Psoas muscle (tissue), 8 donors: ENCODE measurements at regions of chr1 and their contacts with region 1.

Region 1: DNA sequence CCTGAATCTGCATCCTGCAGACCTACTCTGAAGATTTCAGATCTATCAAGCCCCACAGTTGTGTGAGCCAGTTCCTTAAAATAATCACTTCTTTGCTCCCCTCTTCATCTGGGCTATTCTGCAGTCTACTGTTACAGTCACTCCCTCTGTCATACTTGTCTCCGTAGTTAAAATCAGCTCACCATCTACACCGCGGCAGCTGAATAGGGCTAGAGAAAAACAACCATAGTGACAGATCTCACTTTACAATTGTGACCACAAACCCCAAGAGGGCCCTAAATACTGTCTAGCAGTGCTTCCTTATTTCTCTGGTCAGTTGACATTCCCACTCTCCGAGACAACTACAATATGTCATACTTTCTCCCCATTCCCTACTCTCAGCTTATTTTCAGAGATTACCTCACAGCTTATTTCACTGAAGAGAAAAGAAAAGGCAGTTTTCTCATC is 12.9 kb downstream of the DESI2 start:
- DNase-seq: no peak
- ATAC-seq: peak; percentile 85 to 92 (median 86)
- H3K4me3 ChIP-seq: peak overlapping the region; percentile 35
- H3K27ac ChIP-seq: peak overlapping the region; percentile 65
- H3K4me1 ChIP-seq: peaks cover 30% of the 10 kb centered on the region
- H3K27me3 ChIP-seq: no peaks in the 10 kb centered on the region
- CTCF ChIP-seq: no peak

Region 2: DNA sequence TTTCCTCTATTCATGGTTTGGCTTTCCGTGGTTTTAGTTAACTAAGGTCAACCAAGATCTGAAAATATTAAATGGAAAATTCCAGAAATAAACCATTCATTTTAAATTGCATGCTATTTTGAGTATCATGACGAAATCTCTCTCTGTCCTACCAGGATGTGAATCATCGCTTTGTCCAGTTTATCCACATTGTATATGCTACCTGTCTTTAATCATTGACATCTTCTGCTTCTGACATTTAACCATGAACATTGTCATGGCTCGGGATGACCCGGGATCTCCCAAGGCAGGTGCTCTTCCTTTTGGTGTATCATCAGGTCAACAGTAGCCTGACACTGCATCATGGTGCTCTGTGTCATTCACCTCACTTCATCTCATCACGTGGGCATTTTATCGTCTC is 324.0 kb after region 1 on chr1:
- intact Hi-C with region 1: loop called in 1 of 2 experiments (anchors 10 kb)
- DNase-seq: no peak
- ATAC-seq: peak in 1 of 4 donors; percentile 39
- H3K4me3 ChIP-seq: no peak overlapping the region
- H3K27ac ChIP-seq: no peak overlapping the region
- H3K4me1 ChIP-seq: no peaks in the 10 kb centered on the region
- H3K27me3 ChIP-seq: no peaks in the 10 kb centered on the region
- CTCF ChIP-seq: no peak